IMR-90 (cell line): ENCODE measurements at regions of chr3 and their contacts with region 1.

Region 1: DNA sequence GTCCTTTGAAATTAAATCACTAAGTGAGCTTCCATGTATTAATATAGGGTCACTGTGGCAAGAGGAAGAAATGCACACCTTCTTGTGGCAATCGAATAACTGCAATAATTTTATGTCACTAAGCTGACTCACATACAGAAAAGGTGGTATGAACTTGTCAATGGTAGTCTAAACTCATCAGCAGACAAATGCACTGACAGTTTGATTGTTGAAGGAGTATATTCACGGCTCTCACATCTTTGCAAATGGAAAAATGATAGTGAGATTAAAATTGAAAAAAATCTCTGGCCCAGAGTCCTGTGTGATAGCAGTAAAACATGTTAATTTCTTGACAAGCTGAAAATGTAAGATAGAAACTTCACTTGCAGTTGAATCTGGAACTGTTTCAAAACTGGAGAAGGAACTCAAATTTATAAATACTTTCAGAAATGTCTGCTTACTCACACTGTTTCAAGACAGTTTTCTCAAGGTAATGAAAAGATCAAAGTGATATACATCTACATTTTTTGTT is 215.8 kb upstream of the CADM2 start:
- DNase-seq: no peak
- ATAC-seq: no peak
- H3K4me3 ChIP-seq: no peak overlapping the region
- H3K27ac ChIP-seq: no peak overlapping the region
- H3K4me1 ChIP-seq: no peaks in the 10 kb centered on the region
- H3K27me3 ChIP-seq: no peaks in the 10 kb centered on the region
- CTCF ChIP-seq: no peak
- POLR2A ChIP-seq: no peak
- RAD21 ChIP-seq: no peak

Region 2: GRCh38 chr3:83218339-83219200 is 1524.4 kb before region 1 on chr3:
- CTCF ChIA-PET with region 1: no interaction called
- POLR2A ChIA-PET with region 1: no interaction called
- dilution Hi-C with region 1: no loop called
- in situ Hi-C with region 1: no loop called
- intact Hi-C with region 1: loop called (anchors 5 kb)
- DNase-seq: no peak
- ATAC-seq: no peak
- H3K4me3 ChIP-seq: no peak overlapping the region
- H3K27ac ChIP-seq: no peak overlapping the region
- H3K4me1 ChIP-seq: no peaks in the 10 kb centered on the region
- H3K27me3 ChIP-seq: no peaks in the 10 kb centered on the region
- CTCF ChIP-seq: no peak
- POLR2A ChIP-seq: no peak
- RAD21 ChIP-seq: no peak

Region 3: GRCh38 chr3:84066920-84067319 is 676.0 kb before region 1 on chr3:
- CTCF ChIA-PET with region 1: no interaction called
- POLR2A ChIA-PET with region 1: no interaction called
- dilution Hi-C with region 1: no loop called
- in situ Hi-C with region 1: no loop called
- intact Hi-C with region 1: no loop called
- DNase-seq: no peak
- ATAC-seq: no peak
- H3K4me3 ChIP-seq: no peak overlapping the region
- H3K27ac ChIP-seq: no peak overlapping the region
- H3K4me1 ChIP-seq: no peaks in the 10 kb centered on the region
- H3K27me3 ChIP-seq: no peaks in the 10 kb centered on the region
- CTCF ChIP-seq: no peak
- POLR2A ChIP-seq: no peak
- RAD21 ChIP-seq: no peak

Region 4: GRCh38 chr3:84637272-84637671 is 105.7 kb before region 1 on chr3:
- CTCF ChIA-PET with region 1: no interaction called
- POLR2A ChIA-PET with region 1: no interaction called
- dilution Hi-C with region 1: no loop called
- in situ Hi-C with region 1: no loop called
- intact Hi-C with region 1: no loop called
- DNase-seq: no peak
- ATAC-seq: no peak
- H3K4me3 ChIP-seq: no peak overlapping the region
- H3K27ac ChIP-seq: no peak overlapping the region
- H3K4me1 ChIP-seq: no peaks in the 10 kb centered on the region
- H3K27me3 ChIP-seq: no peaks in the 10 kb centered on the region
- CTCF ChIP-seq: no peak
- POLR2A ChIP-seq: no peak
- RAD21 ChIP-seq: no peak